ENCODE measurements at regions of chrX and their contacts with region 1.

Region 1: DNA sequence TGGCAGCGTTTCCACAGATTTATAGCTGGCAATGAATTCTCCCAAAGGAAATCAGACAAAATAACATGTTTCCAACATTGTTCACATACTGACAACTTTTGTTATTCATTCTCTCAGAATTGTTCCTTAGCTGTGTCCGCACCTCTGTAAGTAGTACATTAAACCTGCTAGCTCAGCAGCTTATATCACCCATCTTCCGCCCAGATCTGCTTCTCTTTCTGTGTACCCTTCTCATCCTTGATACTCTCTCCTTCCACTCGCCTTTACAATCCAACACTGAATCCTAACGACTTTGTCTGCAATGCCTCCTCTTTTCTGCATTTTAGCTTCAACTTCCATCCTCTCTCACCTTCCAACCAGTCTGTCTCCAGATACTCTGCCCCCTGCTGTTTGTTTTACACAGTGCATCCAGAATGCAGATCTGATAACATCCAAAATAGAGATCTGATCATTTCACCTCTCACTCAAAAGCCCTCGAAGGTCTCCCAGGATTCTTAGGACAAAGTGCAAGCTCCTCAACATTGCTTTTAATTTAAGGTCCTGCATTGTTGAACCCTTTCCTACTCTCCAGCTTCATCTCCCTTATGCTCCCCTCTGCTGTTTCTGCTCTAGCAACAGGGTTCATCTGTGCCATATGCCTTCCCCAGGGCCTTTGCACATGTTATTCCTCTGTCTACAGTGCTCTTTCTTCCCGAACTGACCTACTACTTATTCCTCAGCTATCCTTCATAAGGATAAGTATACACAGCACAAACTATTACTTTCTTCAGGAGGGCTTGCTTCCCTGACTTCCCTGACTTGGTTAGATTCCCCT is 67.3 kb upstream of the VBP1 start:
- DNase-seq: peak; percentile 17
- H3K4me3 ChIP-seq: no peak overlapping the region
- H3K27ac ChIP-seq: no peak overlapping the region
- H3K4me1 ChIP-seq: no peaks in the 10 kb centered on the region
- CTCF ChIP-seq: peak; percentile 70

Region 2: GRCh38 chrX:154918060-154918483 is 230.9 kb before region 1 on chrX:
- CTCF ChIA-PET with region 1: interaction called, 4 read pairs
- POLR2A ChIA-PET with region 1: no interaction called
- intact Hi-C with region 1: loop called (anchors 5 kb)
- DNase-seq: peak; percentile 42
- H3K4me3 ChIP-seq: peak overlapping the region; percentile 29
- H3K27ac ChIP-seq: no peak overlapping the region
- H3K4me1 ChIP-seq: no peaks in the 10 kb centered on the region
- CTCF ChIP-seq: peak; percentile 84

Region 3: DNA sequence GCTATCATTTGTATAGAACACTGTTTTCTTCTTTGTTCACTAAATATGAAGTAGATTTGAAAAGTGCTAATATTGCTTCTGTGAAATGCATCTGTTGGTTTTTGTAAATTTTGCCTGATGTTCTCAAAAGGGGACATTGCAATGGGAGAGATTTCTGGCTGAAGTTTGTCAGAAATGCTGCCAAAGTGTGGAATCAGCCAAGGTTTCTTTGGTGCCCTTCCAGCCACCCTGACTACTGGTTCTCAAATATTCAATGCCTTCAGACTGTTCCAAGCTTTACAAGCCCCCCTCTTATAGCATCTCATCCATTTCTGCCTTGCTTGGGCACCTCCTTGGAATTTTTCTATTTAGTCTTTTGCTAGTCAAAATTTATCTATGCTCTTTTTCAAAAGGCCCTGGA is 524.4 kb after region 1 on chrX:
- CTCF ChIA-PET with region 1: no interaction called
- POLR2A ChIA-PET with region 1: no interaction called
- intact Hi-C with region 1: no loop called
- DNase-seq: no peak
- H3K4me3 ChIP-seq: no peak overlapping the region
- H3K27ac ChIP-seq: no peak overlapping the region
- H3K4me1 ChIP-seq: no peaks in the 10 kb centered on the region
- CTCF ChIP-seq: no peak

Measured in OCI-LY7 (cell line).